GM10248 (cell line): ENCODE measurements at regions of chr9 and their contacts with region 1.

Region 1: DNA sequence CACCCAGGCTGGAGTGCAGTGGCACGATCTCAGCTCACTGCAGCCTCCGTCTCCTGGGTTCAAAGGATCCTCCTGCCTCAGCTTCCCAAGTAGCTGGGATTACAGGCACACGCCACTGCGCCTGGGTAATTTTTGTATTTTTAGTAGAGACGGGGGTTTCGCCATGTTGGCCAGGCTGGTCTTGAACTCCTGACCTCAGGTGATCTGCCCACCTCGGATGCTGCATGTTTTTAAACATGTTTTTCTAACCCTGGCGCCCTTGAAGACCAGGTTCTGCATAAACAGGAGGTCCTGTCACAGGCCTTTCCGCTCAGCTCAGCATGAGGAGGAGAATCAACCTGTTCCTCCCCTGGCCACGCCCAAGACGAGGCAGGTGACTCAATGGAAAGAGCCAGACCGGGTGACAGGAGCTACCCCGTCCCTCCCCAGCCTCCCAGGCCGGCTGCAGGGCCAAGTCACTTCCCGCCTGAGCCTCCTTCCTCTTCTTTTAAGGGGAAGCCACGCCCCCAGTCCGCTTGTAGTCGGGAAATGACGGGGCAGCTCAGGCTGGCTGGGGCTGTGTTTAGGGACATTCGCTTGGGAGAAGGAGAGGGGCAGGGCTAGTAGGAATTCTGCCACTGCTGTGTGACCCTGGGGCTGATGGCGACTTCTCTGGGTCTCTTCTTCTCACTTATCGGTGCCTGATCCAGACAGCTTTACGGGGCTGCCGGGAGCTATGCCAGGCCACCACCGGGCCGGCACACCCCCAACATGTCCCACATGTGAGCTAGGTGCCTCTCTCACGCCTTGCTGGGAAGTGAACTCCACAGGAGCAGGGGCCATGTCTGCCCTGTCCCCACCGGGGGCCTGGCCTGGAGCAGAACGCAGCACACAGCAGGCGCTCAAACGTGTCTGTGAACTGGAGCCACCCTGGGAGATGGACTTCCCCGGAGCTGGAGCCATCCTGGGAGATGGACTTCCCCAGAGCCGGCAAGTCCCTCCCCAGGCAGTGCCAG is 6.1 kb downstream of the NOTCH1 start:
- DNase-seq: peak; percentile 88
- CTCF ChIP-seq: no peak

Region 2: DNA sequence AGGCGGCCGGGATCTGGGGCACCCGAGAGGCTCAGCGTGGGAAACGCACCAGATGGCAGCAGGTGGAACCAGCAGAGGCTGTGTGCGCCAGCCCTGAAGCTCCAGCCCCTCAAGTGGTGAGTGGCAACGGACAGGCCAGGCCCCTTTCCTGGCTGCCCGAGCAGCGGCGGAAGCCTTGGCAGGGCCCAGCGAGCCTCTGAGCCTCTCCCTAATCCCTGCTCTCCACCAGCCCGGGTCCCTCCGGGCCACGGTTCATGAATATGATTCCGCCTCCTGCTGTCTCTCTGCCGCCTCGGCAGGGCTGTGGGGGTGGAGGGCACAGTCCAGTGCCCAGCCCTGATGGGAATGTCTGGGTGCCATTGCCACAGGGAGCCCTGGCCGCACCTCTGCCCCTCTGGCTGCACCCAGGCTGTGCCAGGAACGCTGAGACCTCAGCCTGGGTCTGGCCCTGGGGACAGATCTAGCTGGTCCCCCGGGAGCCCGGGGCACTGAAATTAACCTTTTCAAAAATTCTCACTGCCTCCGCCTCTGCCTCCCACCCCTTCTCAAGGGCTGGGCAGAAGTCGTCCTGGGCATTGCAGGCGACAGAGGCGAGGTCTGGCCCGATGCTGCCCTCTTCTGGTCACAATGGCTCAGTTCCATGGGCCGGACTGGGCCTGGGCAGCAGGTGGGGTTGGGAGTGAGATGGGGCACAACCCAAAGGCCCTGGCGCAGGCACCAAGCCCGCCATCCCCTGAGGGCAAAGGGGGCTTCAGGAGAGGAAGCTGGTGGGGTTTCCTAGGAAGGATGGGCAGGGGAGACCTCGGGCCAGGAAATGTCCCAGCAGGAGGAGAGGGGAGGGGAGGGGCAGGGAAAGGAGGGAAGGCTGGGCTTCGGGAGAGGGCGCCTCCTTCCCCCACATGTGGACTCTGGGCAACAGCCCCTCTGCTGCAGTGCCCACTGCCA is 256.2 kb before region 1 on chr9:
- CTCF ChIA-PET with region 1: no interaction called
- POLR2A ChIA-PET with region 1: no interaction called
- DNase-seq: peak; percentile 91
- CTCF ChIP-seq: peak; percentile 99

Region 3: DNA sequence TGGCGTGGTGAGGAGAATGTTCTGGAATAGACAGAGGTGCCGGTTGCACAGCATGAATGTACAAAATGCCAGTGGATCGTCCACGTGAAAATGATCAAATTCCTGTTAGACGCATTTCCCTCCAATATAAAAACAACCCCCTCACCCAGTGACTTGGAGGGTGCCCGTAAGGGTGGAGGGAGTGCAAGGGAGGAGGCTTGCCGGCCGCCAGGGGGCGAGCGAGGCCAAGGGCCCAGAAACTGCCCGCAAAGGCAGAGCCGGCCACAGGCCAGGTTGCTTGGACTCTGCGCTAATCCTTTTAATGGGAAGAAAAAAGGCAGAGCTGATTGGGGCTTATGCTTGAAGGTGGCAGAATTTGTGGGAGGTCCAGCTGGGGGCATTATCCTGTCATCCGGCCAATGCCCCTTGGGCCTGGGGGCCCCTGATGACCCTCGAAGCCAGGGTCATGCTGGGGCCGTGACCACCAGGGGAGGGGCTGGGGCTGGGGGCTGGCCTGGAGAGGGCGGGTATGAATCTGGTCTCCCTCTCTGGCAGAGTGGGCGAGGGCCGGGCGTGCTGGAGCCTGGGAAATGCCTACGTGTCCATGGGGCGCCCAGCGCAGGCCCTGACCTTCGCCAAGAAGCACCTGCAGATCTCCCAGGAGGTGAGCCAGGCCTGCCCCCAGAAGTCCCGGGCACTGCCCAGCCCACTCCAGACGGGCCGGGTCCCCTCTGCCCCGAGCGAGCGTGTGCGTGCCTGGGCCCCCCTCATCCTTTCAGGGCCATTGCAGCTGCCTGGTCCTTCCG is 200.4 kb before region 1 on chr9:
- CTCF ChIA-PET with region 1: no interaction called
- POLR2A ChIA-PET with region 1: no interaction called
- DNase-seq: peak; percentile 83
- CTCF ChIP-seq: peak; percentile 91

Region 4: DNA sequence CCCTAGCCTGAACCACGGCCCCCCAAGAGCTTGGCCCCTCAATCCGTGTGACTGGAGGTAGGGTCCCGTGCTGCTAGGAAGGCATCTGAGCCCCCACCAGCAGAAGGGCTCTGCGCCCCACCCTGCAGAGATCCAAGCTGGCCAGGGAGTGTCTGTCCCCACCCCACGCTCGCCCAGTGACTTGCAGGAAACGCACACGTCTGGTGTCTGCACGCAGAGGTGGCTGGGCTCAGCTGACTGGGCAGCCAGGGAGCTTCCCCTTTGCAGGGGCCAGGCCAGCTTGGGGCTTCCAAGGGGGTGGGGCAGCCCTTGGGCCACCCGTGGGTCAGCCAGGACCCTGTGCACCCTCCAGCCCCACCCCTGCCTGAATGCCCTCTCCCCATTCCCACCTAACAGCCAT is 18.2 kb before region 1 on chr9:
- CTCF ChIA-PET with region 1: no interaction called
- POLR2A ChIA-PET with region 1: no interaction called
- DNase-seq: no peak
- CTCF ChIP-seq: no peak

Region 5: DNA sequence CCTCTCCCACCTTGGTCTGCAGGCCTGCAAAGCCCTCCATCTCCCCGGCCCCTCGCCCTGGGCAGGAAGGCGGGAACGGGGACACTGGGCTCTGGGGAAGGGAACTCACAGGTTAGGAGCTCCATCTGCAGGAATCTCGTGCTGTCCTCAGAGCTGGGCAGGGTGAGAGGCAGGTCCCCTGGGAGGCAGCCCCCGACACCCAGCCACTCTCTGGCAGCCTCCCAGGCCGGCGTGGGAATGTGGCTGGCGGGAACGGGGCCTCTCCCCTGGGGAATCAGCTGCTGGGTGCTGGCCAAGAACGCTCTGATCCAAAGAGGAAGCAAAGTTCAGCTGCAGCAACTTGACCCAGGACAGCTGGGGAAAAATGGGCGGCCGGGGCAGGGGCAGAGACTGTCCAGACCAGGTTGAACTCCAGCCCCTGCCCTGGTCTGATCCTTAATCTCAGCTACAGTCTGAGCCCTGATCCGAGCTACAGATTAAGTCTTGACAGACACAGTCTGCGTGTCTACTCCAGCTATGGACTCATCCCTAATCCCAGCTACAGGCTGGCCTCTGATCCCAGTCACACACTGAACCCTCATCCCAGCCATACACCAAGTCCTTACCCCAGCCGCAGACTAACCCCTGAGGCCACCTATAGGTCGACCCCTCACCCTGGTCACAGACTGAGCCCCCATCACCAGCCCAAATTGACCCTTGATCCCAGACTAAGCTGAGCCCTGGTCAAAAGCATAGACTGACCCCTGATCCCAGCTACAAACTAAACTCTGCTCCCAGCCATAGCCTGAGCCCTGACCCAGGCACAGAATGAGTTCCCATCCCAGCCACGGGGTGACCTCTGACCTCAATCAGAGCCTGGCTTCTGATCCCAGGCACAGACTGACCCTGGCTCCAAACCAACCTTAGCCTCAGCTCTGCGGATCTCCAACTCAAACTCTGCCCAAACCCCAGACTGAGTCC is 85.7 kb after region 1 on chr9:
- CTCF ChIA-PET with region 1: interaction called, 10 read pairs
- POLR2A ChIA-PET with region 1: interaction called, 4 read pairs
- DNase-seq: no peak
- CTCF ChIP-seq: peak; percentile 47